ENCODE measurements at regions of chr5 and their contacts with region 1.

Region 1: GRCh38 chr5:142922223-142922952 is 152.2 kb downstream of the ARHGAP26 start:
- DNase-seq: peak; percentile 90
- H3K4me3 ChIP-seq: no peak overlapping the region
- H3K27ac ChIP-seq: peak overlapping the region; percentile 62
- H3K4me1 ChIP-seq: peaks cover 34% of the 10 kb centered on the region
- H3K27me3 ChIP-seq: no peaks in the 10 kb centered on the region
- CTCF ChIP-seq: peak in 1 of 2 donors; percentile 24
- POLR2A ChIP-seq: no peak

Region 2: DNA sequence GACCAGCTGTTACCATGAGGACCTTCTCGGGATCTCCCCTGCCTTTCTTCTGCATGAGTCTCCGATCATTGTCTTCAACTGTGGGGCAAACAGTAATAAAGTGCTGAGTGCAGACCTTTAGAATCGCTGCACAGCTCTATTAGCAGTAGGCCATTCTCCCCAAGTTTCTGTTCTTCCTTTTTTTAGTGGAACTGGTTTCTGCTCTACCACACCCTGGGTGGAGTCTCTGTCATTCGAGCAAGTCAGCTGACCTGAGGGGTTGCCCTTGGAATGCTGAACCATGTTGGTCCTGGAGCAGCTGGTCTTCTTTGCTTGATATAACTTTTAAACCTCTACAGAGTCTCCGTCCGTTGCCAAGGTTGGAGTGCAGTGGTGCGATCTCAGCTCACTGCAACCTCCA is 876.2 kb before region 1 on chr5:
- CTCF ChIA-PET with region 1: no interaction called
- POLR2A ChIA-PET with region 1: no interaction called
- dilution Hi-C with region 1: no loop called
- intact Hi-C with region 1: no loop called
- DNase-seq: no peak
- H3K4me3 ChIP-seq: no peak overlapping the region
- H3K27ac ChIP-seq: no peak overlapping the region
- H3K4me1 ChIP-seq: no peaks in the 10 kb centered on the region
- H3K27me3 ChIP-seq: peaks cover 2 to 4% of the 10 kb centered on the region in 2 experiments
- CTCF ChIP-seq: no peak
- POLR2A ChIP-seq: no peak

Region 3: DNA sequence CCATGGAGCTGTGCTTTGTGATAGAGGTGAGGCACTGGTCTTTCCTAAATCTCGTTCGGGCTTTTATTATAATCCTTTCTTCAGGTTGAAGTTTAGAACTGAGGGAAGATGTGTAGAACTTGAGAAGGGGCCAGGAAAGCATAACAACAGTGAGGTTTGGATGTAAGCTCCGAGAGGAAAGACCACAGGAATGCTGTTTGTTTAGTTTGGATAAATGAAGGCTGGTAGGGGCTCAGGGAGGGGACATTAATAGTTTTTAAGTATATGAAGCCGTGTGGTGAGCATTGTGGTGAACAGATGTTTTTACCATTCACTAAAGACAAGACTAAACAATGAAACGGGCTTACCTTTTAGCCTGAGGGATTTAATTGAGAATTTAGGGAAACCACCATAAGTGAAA is 21.5 kb before region 1 on chr5:
- CTCF ChIA-PET with region 1: no interaction called
- POLR2A ChIA-PET with region 1: no interaction called
- dilution Hi-C with region 1: no loop called
- intact Hi-C with region 1: no loop called
- DNase-seq: no peak
- H3K4me3 ChIP-seq: no peak overlapping the region
- H3K27ac ChIP-seq: no peak overlapping the region
- H3K4me1 ChIP-seq: peaks cover 4% of the 10 kb centered on the region
- H3K27me3 ChIP-seq: no peaks in the 10 kb centered on the region
- CTCF ChIP-seq: no peak
- POLR2A ChIP-seq: no peak

Region 4: GRCh38 chr5:142938266-142938880 is 16.0 kb after region 1 on chr5:
- CTCF ChIA-PET with region 1: interaction called, 24 read pairs
- POLR2A ChIA-PET with region 1: no interaction called
- dilution Hi-C with region 1: no loop called
- intact Hi-C with region 1: loop called (anchors 1 kb)
- DNase-seq: peak; percentile 41
- H3K4me3 ChIP-seq: no peak overlapping the region
- H3K27ac ChIP-seq: no peak overlapping the region
- H3K4me1 ChIP-seq: peaks cover 22% of the 10 kb centered on the region
- H3K27me3 ChIP-seq: no peaks in the 10 kb centered on the region
- CTCF ChIP-seq: no peak
- POLR2A ChIP-seq: no peak

Region 5: GRCh38 chr5:142966121-142966420 is 43.7 kb after region 1 on chr5:
- CTCF ChIA-PET with region 1: interaction called, 14 read pairs
- POLR2A ChIA-PET with region 1: no interaction called
- dilution Hi-C with region 1: no loop called
- intact Hi-C with region 1: loop called (anchors 1 kb)
- DNase-seq: no peak
- H3K4me3 ChIP-seq: no peak overlapping the region
- H3K27ac ChIP-seq: no peak overlapping the region
- H3K4me1 ChIP-seq: no peaks in the 10 kb centered on the region
- H3K27me3 ChIP-seq: no peaks in the 10 kb centered on the region
- CTCF ChIP-seq: no peak
- POLR2A ChIP-seq: no peak

Region 6: GRCh38 chr5:143008809-143009521 is 86.6 kb after region 1 on chr5:
- CTCF ChIA-PET with region 1: interaction called, 10 read pairs
- POLR2A ChIA-PET with region 1: no interaction called
- dilution Hi-C with region 1: no loop called
- intact Hi-C with region 1: no loop called
- DNase-seq: peak; percentile 64
- H3K4me3 ChIP-seq: no peak overlapping the region
- H3K27ac ChIP-seq: no peak overlapping the region
- H3K4me1 ChIP-seq: peaks cover 3% of the 10 kb centered on the region
- H3K27me3 ChIP-seq: no peaks in the 10 kb centered on the region
- CTCF ChIP-seq: no peak
- POLR2A ChIP-seq: no peak

Region 7: GRCh38 chr5:143359869-143360268 is 437.5 kb after region 1 on chr5:
- CTCF ChIA-PET with region 1: no interaction called
- POLR2A ChIA-PET with region 1: no interaction called
- dilution Hi-C with region 1: no loop called
- intact Hi-C with region 1: no loop called
- DNase-seq: no peak
- H3K4me3 ChIP-seq: no peak overlapping the region
- H3K27ac ChIP-seq: no peak overlapping the region
- H3K4me1 ChIP-seq: peaks cover 9% of the 10 kb centered on the region
- H3K27me3 ChIP-seq: no peaks in the 10 kb centered on the region
- CTCF ChIP-seq: no peak
- POLR2A ChIP-seq: no peak

Region 8: DNA sequence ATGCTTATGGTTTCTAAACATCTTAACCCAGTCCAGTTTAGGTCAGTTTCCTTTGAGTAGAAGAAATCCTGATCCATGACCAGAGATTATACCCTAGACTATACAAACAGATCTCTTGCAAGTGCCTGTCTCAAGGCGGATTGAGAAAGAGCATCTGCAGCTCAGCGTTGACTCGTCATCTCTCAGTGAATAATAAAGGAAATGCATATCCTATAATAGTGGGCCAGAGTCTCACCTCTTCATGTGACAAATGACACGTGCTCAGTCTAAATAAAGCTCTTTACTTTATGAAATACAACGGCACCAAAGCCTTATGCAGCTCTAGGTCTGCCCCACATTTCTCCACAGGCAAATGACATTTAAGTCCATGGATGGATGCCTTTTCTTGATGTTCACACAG is 660.5 kb after region 1 on chr5:
- CTCF ChIA-PET with region 1: no interaction called
- POLR2A ChIA-PET with region 1: no interaction called
- dilution Hi-C with region 1: no loop called
- intact Hi-C with region 1: loop called (anchors 10 kb)
- DNase-seq: no peak
- H3K4me3 ChIP-seq: no peak overlapping the region
- H3K27ac ChIP-seq: no peak overlapping the region
- H3K4me1 ChIP-seq: peaks cover 18% of the 10 kb centered on the region
- H3K27me3 ChIP-seq: no peaks in the 10 kb centered on the region
- CTCF ChIP-seq: no peak
- POLR2A ChIP-seq: no peak

Region 9: DNA sequence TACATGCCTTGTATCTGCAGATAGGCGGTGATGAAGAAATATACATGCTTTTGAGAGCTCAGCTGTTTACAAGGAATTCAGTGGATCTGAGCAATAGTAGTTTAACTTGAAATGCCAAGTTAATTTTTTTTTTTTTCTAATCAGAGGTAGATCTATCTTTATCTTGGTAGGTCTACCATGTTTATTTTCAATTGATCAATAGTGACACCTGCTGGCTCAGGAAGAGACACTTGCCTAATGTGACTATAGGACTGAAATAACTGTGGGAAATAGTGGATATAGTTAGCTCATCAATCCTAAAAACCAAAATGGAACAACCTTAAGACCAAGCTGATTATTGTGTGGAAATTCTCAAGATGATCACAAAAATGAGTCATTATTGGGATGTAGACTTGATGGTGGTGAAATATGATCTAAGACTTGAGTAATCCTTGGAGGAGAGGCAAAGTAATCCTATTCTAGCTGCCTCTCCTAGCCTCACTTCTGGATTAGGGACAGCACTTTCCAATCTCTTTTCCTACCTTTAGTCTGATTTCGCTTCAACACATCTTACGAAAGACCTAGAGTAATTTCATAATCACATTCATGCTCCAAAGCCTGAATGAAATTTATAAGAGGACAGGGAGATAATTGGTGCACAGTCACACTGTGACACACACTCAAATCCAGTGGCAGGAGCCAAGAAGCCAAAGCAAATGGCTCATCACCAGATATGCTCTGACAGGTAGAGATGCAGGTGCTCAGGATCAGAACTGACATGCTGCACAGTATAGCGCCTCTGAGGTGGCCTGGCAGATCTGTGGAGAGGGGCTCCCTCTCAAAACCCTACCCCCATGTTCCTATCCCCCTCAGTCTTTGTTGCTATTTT is 1045.9 kb after region 1 on chr5:
- CTCF ChIA-PET with region 1: interaction called, 4 read pairs
- POLR2A ChIA-PET with region 1: no interaction called
- dilution Hi-C with region 1: no loop called
- intact Hi-C with region 1: loop called (anchors 1 kb)
- DNase-seq: peak; percentile 54
- H3K4me3 ChIP-seq: no peak overlapping the region
- H3K27ac ChIP-seq: no peak overlapping the region
- H3K4me1 ChIP-seq: peaks cover 9% of the 10 kb centered on the region
- H3K27me3 ChIP-seq: no peaks in the 10 kb centered on the region
- CTCF ChIP-seq: peak in 1 of 2 donors; percentile 18
- POLR2A ChIP-seq: no peak

Region 10: DNA sequence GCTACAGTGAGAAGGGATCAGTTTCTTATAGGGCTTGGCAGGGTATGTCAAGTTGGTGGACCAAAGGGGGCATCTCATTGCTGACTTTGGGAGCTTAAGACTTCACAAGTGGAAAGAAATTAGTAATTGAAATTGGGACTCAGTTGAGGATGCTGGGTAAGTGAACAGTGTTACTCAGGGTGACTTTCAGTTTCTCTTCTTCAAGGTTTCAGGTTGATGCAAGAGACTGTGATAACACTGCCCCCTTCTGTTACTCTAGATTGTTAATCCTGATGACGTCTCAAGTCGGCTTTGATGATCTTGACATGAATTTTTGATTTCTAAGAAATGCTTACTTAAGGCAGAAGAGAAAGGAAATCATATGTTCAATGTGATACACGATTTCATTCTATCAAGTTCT is 1269.6 kb after region 1 on chr5:
- CTCF ChIA-PET with region 1: interaction called, 4 read pairs
- POLR2A ChIA-PET with region 1: no interaction called
- dilution Hi-C with region 1: no loop called
- intact Hi-C with region 1: loop called (anchors 5 kb)
- DNase-seq: peak; percentile 88
- H3K4me3 ChIP-seq: no peak overlapping the region
- H3K27ac ChIP-seq: peak overlapping the region; percentile 88
- H3K4me1 ChIP-seq: peaks cover 44% of the 10 kb centered on the region
- H3K27me3 ChIP-seq: no peaks in the 10 kb centered on the region
- CTCF ChIP-seq: peak; percentile 43 to 60
- POLR2A ChIP-seq: no peak

Measured in endothelial cell of umbilical vein (primary cell).